K562 (cell line): ENCODE measurements at regions of chr11 and their contacts with region 1.

Region 1: GRCh38 chr11:61639816-61640443 is 40.3 kb upstream of the DAGLA start:
- DNase-seq: peak in 1 of 4 experiments; percentile 74
- ATAC-seq: peak; percentile 25
- H3K4me3 ChIP-seq: no peak overlapping the region
- H3K27ac ChIP-seq: no peak overlapping the region
- H3K4me1 ChIP-seq: peaks cover 3 to 5% of the 10 kb centered on the region in 2 experiments; a peak in 3 of 5 replicates
- H3K27me3 ChIP-seq: peaks cover 28 to 34% of the 10 kb centered on the region in 2 experiments
- CTCF ChIP-seq: no peak
- EP300 ChIP-seq: no peak
- POLR2A ChIP-seq: no peak
- RAD21 ChIP-seq: no peak

Region 2: GRCh38 chr11:61477727-61478148 is 162.2 kb before region 1 on chr11:
- CTCF ChIA-PET with region 1: no interaction called
- POLR2A ChIA-PET with region 1: no interaction called
- in situ Hi-C with region 1: no loop called
- intact Hi-C with region 1: loop called (anchors 2 kb)
- DNase-seq: peak; percentile 65 to 82 (median 78)
- ATAC-seq: peak; percentile 59
- H3K4me3 ChIP-seq: no peak overlapping the region
- H3K27ac ChIP-seq: no peak overlapping the region
- H3K4me1 ChIP-seq: peaks cover 0 to 26% of the 10 kb centered on the region in 2 experiments; a peak in 3 of 5 replicates
- H3K27me3 ChIP-seq: peaks cover 11 to 33% of the 10 kb centered on the region in 2 experiments; a peak in 4 of 5 replicates
- CTCF ChIP-seq: peak; percentile 87 to 90 (median 89)
- EP300 ChIP-seq: no peak
- POLR2A ChIP-seq: no peak
- RAD21 ChIP-seq: peak; percentile 75 to 86